ENCODE measurements at regions of chr9 and their contacts with region 1.

Region 1: GRCh38 chr9:122931226-122932121 is at the start of gene ZBTB26:
- DNase-seq: peak; percentile 100
- H3K27ac ChIP-seq: peak within 1 kb of the TSS; percentile 91
- CTCF ChIP-seq: no peak

Region 2: GRCh38 chr9:122846371-122846940 is 85.0 kb before region 1 on chr9:
- CTCF ChIA-PET with region 1: no interaction called
- POLR2A ChIA-PET with region 1: no interaction called
- DNase-seq: no peak
- H3K27ac ChIP-seq: no peak overlapping the region
- CTCF ChIP-seq: no peak

Region 3: GRCh38 chr9:122904823-122905710 is 26.4 kb before region 1 on chr9 and contains the start of gene RC3H2:
- CTCF ChIA-PET with region 1: interaction called, 5 read pairs
- POLR2A ChIA-PET with region 1: interaction called, 11 read pairs
- DNase-seq: peak; percentile 100
- H3K27ac ChIP-seq: peak within 1 kb of the TSS; percentile 94
- CTCF ChIP-seq: no peak

Region 4: DNA sequence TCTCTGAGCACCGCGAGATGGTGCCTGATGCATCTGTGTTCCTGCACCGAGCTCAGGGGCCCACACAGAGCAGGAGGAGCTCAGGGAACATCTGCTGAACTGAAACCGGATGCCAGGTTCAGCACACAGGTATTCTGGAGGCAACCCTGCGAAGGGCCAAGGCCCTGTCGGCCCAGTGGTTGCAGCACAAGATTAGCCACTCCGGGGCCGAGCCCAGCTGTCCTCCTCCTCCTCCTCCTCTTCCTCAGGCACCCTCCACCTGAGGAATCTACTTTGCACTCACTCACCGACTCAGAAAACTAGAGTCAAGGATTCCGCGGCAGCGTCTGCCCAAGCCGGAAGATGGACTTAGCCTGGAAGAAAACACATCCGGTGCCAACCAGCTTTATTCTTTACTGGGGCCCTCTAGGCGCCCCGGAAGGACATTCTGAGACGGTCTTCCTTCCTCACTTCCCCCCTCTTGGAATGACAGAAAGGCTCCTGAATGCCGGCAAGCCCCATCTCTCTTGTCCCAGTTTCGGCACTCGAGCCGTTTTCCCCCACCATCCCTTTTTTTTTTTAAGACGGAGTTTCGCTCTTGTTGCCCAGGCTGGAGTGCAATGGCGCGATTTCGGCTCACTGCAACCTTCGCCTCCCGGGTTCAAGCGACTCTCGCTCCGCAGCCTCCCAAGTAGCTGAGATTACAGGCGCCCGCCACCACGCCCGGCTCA is 18.4 kb before region 1 on chr9 and contains the start of gene ZBTB6:
- CTCF ChIA-PET with region 1: interaction called, 5 read pairs
- POLR2A ChIA-PET with region 1: interaction called, 11 read pairs
- DNase-seq: peak; percentile 91
- H3K27ac ChIP-seq: peak within 1 kb of the TSS; percentile 94
- CTCF ChIP-seq: no peak

Region 5: GRCh38 chr9:122978601-122979000 is 47.1 kb after region 1 on chr9:
- CTCF ChIA-PET with region 1: no interaction called
- POLR2A ChIA-PET with region 1: no interaction called
- DNase-seq: no peak
- H3K27ac ChIP-seq: no peak overlapping the region
- CTCF ChIP-seq: no peak

Measured in RWPE1 (cell line).